ENCODE measurements at regions of chr14 and their contacts with region 1.

Region 1: DNA sequence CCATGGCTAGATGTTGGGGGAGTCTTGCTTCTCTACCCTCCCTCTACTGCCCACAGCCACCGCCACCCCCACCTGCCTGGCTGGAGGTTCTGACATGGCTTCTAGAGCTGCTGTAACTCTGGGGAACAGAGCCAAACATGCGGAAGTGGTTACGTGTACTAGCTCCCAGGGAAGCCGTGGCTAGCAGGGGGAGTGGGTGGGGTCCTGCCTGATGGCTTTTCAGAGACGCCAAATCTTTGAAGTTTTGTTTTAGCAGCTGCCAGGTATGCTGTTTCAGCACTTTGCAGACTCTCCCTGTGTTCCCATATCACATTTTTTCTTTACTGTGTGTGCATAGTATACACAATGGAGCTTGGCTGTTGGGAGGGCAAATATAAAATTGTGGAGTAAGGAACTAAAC is 150.3 kb downstream of the TGFB3 start:
- DNase-seq: peak; percentile 73
- H3K4me3 Mint-ChIP-seq: peak overlapping the region; percentile 33
- H3K27ac Mint-ChIP-seq: peak overlapping the region; percentile 96
- H3K4me1 Mint-ChIP-seq: peaks cover 28% of the 10 kb centered on the region
- H3K27me3 Mint-ChIP-seq: no peaks in the 10 kb centered on the region
- CTCF ChIP-seq: no peak

Region 2: GRCh38 chr14:75615200-75615599 is 216.3 kb before region 1 on chr14:
- CTCF ChIA-PET with region 1: no interaction called
- POLR2A ChIA-PET with region 1: no interaction called
- intact Hi-C with region 1: no loop called
- DNase-seq: no peak
- H3K4me3 Mint-ChIP-seq: no peak overlapping the region
- H3K27ac Mint-ChIP-seq: no peak overlapping the region
- H3K4me1 Mint-ChIP-seq: peaks cover 8% of the 10 kb centered on the region
- H3K27me3 Mint-ChIP-seq: no peaks in the 10 kb centered on the region
- CTCF ChIP-seq: no peak

Region 3: GRCh38 chr14:75861161-75861621 is 29.7 kb after region 1 on chr14:
- CTCF ChIA-PET with region 1: no interaction called
- POLR2A ChIA-PET with region 1: interaction called, 8 read pairs
- intact Hi-C with region 1: loop called (anchors 2 kb)
- DNase-seq: peak; percentile 92
- H3K4me3 Mint-ChIP-seq: peak overlapping the region; percentile 1
- H3K27ac Mint-ChIP-seq: peak overlapping the region; percentile 66
- H3K4me1 Mint-ChIP-seq: peaks cover 27% of the 10 kb centered on the region
- H3K27me3 Mint-ChIP-seq: no peaks in the 10 kb centered on the region
- CTCF ChIP-seq: no peak

Measured in MCF 10A (cell line).